Common myeloid progenitor, CD34-positive (primary cell): ENCODE measurements at regions of chr2 and their contacts with region 1.

Region 1: GRCh38 chr2:6896930-6897759 is 19.6 kb downstream of the RSAD2 start:
- DNase-seq: peak; percentile 55 to 64 (median 60)
- H3K4me3 ChIP-seq: no peak overlapping the region
- H3K27ac ChIP-seq: no peak overlapping the region
- H3K4me1 ChIP-seq: no peaks in the 10 kb centered on the region
- H3K27me3 ChIP-seq: no peaks in the 10 kb centered on the region

Region 2: GRCh38 chr2:6865346-6866274 is 31.5 kb before region 1 on chr2 and contains the start of gene CMPK2:
- CTCF ChIA-PET with region 1: interaction called, 41 read pairs
- POLR2A ChIA-PET with region 1: no interaction called
- DNase-seq: peak; percentile 78 to 92 (median 92)
- H3K4me3 ChIP-seq: peak within 1 kb of the TSS; percentile 75 to 96 (median 86)
- H3K27ac ChIP-seq: peak within 1 kb of the TSS; percentile 56 to 78
- H3K4me1 ChIP-seq: peaks cover 15 to 35% (median 23%) of the 10 kb centered on the region in 4 experiments
- H3K27me3 ChIP-seq: no peaks in the 10 kb centered on the region

Region 3: DNA sequence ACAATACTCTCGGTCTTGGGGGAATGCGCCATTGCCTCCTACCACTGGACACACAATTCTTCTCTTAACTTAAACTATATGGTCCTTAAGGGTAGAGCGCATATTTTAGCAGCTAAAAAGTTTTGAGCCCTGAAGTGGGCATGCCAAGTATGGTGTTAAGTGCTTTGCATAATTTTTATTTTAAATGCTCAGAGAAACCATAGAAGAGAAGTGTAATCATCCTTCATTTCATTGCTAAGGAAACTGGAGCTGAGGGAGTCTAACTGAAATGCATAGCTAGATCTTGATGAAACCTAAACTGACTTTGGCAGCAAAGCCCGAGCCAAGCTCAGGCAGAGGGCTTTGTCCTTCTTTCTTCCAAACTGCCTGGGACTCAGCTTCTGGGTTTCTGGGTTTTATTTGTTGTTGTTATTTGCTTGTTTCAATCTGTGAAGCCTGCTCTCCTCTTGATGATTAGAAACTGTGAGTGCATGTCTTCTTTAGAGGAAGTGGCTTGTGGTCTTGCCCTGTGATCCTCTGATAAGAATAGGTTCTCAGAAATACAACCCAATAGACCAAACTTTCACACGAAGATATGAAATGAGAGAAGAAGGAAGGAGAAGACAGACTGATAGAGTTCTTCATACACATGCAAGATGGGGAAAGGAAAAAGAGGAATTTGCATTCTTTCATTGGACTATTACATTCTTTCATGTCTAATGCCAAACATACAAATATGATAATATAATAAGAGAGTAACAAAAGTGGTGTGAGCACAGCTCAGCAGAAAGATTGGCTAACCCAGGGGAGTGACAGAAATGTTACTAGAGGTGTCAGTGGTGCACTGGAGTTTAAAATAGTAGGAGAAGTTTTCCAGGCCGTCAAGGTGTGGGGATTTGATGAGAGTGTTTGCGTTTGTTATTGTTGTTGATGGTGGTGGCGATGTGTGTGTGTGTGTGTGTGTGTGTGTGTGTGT is 12.6 kb after region 1 on chr2:
- CTCF ChIA-PET with region 1: interaction called, 126 read pairs
- POLR2A ChIA-PET with region 1: no interaction called
- DNase-seq: peak; percentile 82 to 94 (median 91)
- H3K4me3 ChIP-seq: peak overlapping the region in 4 of 7 experiments; percentile 13 to 50 (median 29)
- H3K27ac ChIP-seq: peak overlapping the region; percentile 62 to 77
- H3K4me1 ChIP-seq: peaks cover 19 to 37% (median 27%) of the 10 kb centered on the region in 4 experiments
- H3K27me3 ChIP-seq: no peaks in the 10 kb centered on the region

Region 4: DNA sequence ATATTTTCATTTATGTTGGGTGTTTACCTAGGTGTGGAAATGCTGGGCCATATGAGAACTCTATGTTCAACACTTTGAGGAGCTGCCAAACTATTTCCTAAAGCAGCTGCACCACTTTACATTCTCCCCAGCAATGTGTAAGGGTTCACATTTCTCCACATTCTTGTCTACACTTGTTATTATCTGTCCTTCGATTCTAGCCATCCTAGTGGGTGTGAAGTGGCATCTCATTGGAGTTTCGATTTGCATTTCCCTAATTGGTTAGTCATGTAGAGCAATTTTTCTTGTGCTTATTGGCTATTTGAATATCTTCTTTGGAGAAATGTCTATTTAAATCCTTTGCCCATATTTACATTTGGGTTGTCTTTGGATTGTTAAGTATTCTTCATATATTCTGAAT is 41.9 kb after region 1 on chr2:
- CTCF ChIA-PET with region 1: no interaction called
- POLR2A ChIA-PET with region 1: no interaction called
- DNase-seq: no peak
- H3K4me3 ChIP-seq: no peak overlapping the region
- H3K27ac ChIP-seq: no peak overlapping the region
- H3K4me1 ChIP-seq: peaks cover 16 to 38% (median 34%) of the 10 kb centered on the region in 4 experiments
- H3K27me3 ChIP-seq: no peaks in the 10 kb centered on the region

Region 5: DNA sequence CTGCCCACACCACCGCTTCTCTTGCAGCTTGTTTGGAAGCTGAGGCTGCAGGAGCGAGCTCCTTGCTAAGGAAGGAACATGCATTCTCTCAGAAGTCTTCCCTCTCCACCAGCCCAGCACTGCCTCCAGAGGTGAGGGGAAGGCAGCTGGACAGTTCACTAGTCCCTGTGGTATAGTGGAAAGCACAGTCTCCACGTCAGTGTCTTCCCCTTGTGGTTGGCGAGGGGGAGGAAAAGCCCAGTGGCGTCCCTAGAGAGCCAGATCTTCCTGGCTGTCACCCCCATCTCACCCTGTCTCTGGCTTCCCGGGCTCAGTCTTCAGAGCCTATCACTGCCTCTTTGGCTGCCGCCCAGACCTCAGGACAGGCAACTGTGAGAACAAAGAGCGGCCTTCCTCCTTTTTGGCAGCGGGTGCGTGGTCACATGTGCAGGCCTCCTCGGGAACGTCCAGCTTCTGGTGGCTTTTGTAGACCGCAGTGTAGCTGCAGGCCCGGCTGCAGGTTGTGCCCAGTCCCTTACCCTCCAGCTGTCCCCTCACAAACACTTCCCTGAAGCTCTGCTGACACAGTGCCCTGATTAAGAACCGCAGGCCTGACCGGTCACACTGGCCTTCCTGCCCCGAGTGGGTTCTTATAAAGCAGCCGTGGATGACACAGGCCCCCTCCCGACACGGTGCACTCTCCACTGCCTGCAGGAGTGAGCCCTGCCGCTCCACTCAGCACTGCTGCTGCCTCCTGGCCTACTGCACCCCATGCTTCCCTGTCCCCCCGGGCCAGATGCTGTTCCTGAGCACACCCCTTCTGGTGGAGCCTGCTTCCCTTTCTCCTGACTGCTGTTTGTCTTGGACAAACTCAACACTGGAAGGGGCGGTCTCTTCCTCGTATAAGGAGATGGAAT is 110.9 kb after region 1 on chr2:
- CTCF ChIA-PET with region 1: interaction called, 18 read pairs
- POLR2A ChIA-PET with region 1: no interaction called
- DNase-seq: peak; percentile 75 to 85 (median 81)
- H3K4me3 ChIP-seq: peak overlapping the region in 4 of 7 experiments; percentile 3 to 58 (median 31)
- H3K27ac ChIP-seq: peak overlapping the region in 1 of 2 experiments; percentile 37
- H3K4me1 ChIP-seq: peaks cover 11 to 70% (median 59%) of the 10 kb centered on the region in 4 experiments
- H3K27me3 ChIP-seq: no peaks in the 10 kb centered on the region

Region 6: GRCh38 chr2:7044261-7045250 is 147.4 kb after region 1 on chr2:
- CTCF ChIA-PET with region 1: interaction called, 10 read pairs
- POLR2A ChIA-PET with region 1: no interaction called
- DNase-seq: peak; percentile 43 to 71 (median 58)
- H3K4me3 ChIP-seq: no peak overlapping the region
- H3K27ac ChIP-seq: no peak overlapping the region
- H3K4me1 ChIP-seq: peaks cover 3 to 47% (median 29%) of the 10 kb centered on the region in 4 experiments
- H3K27me3 ChIP-seq: no peaks in the 10 kb centered on the region

Region 7: DNA sequence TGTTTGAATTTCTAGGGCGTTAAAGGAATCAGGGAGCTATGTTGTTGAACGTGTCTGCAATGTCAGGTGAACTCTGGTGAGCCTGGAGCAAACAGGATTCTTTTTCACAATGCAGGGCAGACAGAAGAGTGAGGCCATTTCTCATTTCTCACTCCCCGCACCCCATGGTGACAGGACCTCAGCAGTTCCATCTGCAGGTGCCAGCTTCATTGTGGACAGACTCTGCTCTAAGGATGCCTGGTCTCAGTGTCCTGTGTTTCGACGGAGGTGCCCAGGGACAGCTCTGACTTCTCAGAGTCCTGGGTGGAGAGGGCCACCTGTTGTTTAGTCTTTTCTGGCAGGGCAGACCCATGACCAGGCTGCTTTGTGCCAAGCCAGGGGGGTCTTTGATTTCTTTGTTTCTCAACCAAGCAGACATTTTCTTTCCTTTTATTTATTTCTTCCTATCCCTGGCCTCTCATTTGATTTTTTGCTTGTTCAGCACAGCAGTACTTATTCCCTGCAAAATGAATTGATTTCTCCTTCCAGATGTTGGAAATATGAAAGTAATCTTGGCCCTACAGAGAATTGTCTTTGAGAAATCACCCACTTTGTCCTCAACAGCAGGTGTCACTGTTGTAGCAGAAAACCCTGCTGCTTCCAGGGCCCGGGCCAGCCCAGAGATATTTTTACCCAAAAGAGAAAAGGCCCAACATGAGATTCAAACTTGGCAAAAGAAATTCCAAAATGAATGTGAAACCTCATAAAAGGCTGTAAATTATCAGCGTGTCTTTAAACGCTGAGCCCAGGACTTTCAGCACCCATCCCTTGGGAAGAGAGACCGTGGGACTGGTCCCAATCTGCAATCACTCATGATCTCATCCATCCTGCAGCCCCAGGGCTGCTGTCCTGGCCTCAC is 221.7 kb after region 1 on chr2:
- CTCF ChIA-PET with region 1: no interaction called
- POLR2A ChIA-PET with region 1: no interaction called
- DNase-seq: peak; percentile 22 to 56 (median 46)
- H3K4me3 ChIP-seq: no peak overlapping the region
- H3K27ac ChIP-seq: no peak overlapping the region
- H3K4me1 ChIP-seq: no peaks in the 10 kb centered on the region
- H3K27me3 ChIP-seq: no peaks in the 10 kb centered on the region